Panc1 (cell line): ENCODE measurements at regions of chr7 and their contacts with region 1.

Region 1: GRCh38 chr7:140010194-140010895 is 52.4 kb downstream of the PARP12 start:
- DNase-seq: no peak
- ATAC-seq: no peak; the same call in 1 of the 2 replicates
- H3K4me3 ChIP-seq: no peak overlapping the region
- H3K27ac ChIP-seq: no peak overlapping the region
- H3K4me1 ChIP-seq: no peaks in the 10 kb centered on the region
- H3K27me3 ChIP-seq: 0 out of 2 replicates have a peak, but pooled peaks cover 5% of the 10 kb centered on the region
- CTCF ChIP-seq: no peak

Region 2: GRCh38 chr7:139889186-139889871 is 121.0 kb before region 1 on chr7:
- CTCF ChIA-PET with region 1: interaction called, 11 read pairs
- POLR2A ChIA-PET with region 1: no interaction called
- in situ Hi-C with region 1: no loop called
- intact Hi-C with region 1: no loop called
- DNase-seq: no peak
- ATAC-seq: no peak
- H3K4me3 ChIP-seq: no peak overlapping the region
- H3K27ac ChIP-seq: no peak overlapping the region
- H3K4me1 ChIP-seq: no peaks in the 10 kb centered on the region
- H3K27me3 ChIP-seq: no peaks in the 10 kb centered on the region
- CTCF ChIP-seq: no peak; the same call in 1 of the 2 replicates

Region 3: GRCh38 chr7:139924461-139924860 is 85.9 kb before region 1 on chr7:
- CTCF ChIA-PET with region 1: no interaction called
- POLR2A ChIA-PET with region 1: no interaction called
- in situ Hi-C with region 1: no loop called
- intact Hi-C with region 1: no loop called
- DNase-seq: no peak
- ATAC-seq: no peak
- H3K4me3 ChIP-seq: no peak overlapping the region
- H3K27ac ChIP-seq: no peak overlapping the region
- H3K4me1 ChIP-seq: no peaks in the 10 kb centered on the region
- H3K27me3 ChIP-seq: no peaks in the 10 kb centered on the region
- CTCF ChIP-seq: no peak

Region 4: GRCh38 chr7:140035400-140036223 is 25.3 kb after region 1 on chr7:
- CTCF ChIA-PET with region 1: no interaction called
- POLR2A ChIA-PET with region 1: no interaction called
- in situ Hi-C with region 1: no loop called
- intact Hi-C with region 1: no loop called
- DNase-seq: no peak
- ATAC-seq: no peak
- H3K4me3 ChIP-seq: no peak overlapping the region
- H3K27ac ChIP-seq: no peak overlapping the region
- H3K4me1 ChIP-seq: no peaks in the 10 kb centered on the region
- H3K27me3 ChIP-seq: no peaks in the 10 kb centered on the region
- CTCF ChIP-seq: no peak

Region 5: DNA sequence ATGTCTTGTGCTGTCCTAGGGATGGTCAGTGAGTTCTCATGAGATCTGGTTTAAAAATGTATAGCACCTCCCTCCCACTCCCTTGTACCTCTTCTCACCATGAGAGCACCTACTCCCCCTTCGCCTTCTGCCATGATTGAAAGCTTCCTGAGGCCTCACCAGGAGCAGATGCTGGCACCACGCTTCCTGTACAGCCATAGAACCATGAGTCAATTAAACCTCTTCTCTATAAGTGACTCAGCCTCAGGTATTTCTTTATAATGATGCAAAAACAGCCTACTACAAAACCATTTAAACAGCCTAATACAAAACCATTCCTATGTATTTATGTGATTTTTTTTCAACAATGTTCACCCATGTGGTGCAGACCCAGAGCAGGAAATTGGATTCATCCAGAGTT is 134.5 kb after region 1 on chr7:
- CTCF ChIA-PET with region 1: no interaction called
- POLR2A ChIA-PET with region 1: no interaction called
- in situ Hi-C with region 1: no loop called
- intact Hi-C with region 1: no loop called
- DNase-seq: no peak
- ATAC-seq: no peak
- H3K4me3 ChIP-seq: no peak overlapping the region
- H3K27ac ChIP-seq: no peak overlapping the region
- H3K4me1 ChIP-seq: no peaks in the 10 kb centered on the region
- H3K27me3 ChIP-seq: no peaks in the 10 kb centered on the region; the same call in 1 of the 2 replicates
- CTCF ChIP-seq: no peak

Region 6: GRCh38 chr7:140551355-140552239 is 541.3 kb after region 1 on chr7:
- CTCF ChIA-PET with region 1: no interaction called
- POLR2A ChIA-PET with region 1: no interaction called
- in situ Hi-C with region 1: no loop called
- intact Hi-C with region 1: no loop called
- DNase-seq: no peak
- ATAC-seq: no peak
- H3K4me3 ChIP-seq: no peak overlapping the region
- H3K27ac ChIP-seq: no peak overlapping the region
- H3K4me1 ChIP-seq: no peaks in the 10 kb centered on the region
- H3K27me3 ChIP-seq: no peaks in the 10 kb centered on the region
- CTCF ChIP-seq: no peak